HEK293 (cell line): ENCODE measurements at regions of chr12 and their contacts with region 1.

Region 1: DNA sequence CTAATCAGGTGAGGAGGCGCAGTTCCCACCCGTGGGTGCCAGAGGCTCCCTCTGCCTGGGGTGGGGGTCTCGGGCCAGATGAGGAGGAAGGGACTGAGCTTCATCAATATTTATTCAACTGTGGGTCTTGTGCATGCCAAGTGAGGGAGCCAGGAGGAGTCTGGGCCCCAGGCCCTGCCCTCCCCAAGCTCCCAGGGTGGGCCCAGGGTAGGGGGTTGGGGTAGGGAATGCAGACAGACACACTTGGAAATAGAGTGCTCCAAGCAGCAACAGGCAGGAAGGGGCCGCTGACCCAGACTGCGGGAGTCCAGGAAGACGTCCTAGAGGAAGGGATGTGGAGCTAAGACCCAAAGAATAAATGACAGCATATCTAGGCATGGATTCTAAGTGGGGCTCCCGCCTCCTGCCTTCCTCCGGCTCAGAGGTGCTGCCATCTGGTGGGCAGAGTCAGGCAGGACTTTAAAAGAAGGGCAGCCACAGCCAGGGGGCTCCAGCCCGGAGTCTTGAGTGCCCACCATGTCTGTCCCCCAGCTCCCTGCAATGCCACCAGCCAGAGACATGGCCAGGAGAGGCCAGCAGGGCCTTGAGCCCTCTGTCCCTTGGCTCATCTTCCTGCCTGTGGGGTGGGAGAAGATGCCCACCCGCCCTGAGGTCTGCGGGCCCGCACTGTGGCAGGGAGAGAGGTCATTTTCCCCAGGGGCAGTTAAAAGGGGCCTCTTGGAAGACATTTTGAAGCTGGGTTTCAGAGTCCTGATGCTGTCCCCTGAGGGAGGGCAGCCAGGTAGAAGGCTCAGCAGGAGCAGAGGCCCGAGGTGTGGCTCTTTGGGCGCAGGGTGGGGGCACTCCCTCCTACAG is 70.1 kb downstream of the PHETA1 start:
- H3K4me3 ChIP-seq: no peak overlapping the region
- H3K27ac ChIP-seq: no peak overlapping the region
- H3K4me1 ChIP-seq: no peaks in the 10 kb centered on the region
- CTCF ChIP-seq: peak; percentile 87

Region 2: DNA sequence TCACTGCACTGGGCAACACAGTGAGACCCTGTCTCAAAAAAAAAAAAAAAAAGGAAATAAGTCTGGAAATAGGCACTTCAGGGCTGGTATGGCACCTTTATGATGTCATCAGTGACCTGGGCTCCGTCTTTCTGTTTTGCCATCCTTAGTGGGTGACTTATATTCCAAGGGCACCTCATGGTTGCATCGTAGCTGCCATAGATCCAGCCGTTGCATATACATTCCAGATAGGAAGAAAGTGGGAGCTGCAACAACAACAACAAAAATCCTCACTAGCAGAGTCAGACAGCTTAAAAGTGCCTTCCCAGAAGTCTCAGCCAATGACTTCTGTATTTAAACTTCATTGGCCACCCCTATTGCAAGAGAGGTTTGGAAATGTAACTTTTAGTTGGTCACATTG is 404.9 kb before region 1 on chr12:
- CTCF ChIA-PET with region 1: interaction called, 28 read pairs
- POLR2A ChIA-PET with region 1: interaction called, 4 read pairs
- H3K4me3 ChIP-seq: no peak overlapping the region
- H3K27ac ChIP-seq: no peak overlapping the region
- H3K4me1 ChIP-seq: no peaks in the 10 kb centered on the region
- CTCF ChIP-seq: no peak

Region 3: DNA sequence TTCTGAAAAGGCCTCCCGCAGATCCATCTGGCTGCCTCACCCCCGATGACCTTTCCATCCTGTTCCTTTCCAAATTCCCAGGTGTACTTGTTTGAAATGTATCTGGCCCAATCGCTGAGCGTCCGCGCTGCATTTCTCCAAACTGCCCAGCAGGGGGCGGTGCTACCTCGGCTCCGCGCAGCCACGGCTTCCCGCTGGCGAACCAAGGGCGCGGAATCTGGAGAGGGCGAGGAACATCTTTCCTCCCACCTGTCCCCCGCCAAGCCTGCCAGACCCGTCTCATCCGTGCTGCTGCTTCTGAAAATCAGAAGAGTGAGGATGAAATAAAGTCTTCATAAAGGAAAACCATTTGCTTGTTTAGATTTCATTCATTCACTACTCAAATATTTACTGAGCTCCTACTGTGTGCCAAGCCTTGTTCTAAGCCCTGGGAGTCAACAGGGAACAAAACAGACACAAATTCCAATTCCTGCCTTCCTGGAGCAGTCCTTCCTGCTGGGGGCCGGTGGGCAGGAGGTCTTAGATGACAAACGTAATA is 361.6 kb before region 1 on chr12:
- CTCF ChIA-PET with region 1: interaction called, 10 read pairs
- POLR2A ChIA-PET with region 1: no interaction called
- H3K4me3 ChIP-seq: no peak overlapping the region
- H3K27ac ChIP-seq: no peak overlapping the region
- H3K4me1 ChIP-seq: no peaks in the 10 kb centered on the region
- CTCF ChIP-seq: peak; percentile 74

Region 4: GRCh38 chr12:111024205-111024801 is 274.5 kb before region 1 on chr12:
- CTCF ChIA-PET with region 1: interaction called, 105 read pairs
- POLR2A ChIA-PET with region 1: no interaction called
- H3K4me3 ChIP-seq: no peak overlapping the region
- H3K27ac ChIP-seq: no peak overlapping the region
- H3K4me1 ChIP-seq: no peaks in the 10 kb centered on the region
- CTCF ChIP-seq: peak; percentile 84

Region 5: DNA sequence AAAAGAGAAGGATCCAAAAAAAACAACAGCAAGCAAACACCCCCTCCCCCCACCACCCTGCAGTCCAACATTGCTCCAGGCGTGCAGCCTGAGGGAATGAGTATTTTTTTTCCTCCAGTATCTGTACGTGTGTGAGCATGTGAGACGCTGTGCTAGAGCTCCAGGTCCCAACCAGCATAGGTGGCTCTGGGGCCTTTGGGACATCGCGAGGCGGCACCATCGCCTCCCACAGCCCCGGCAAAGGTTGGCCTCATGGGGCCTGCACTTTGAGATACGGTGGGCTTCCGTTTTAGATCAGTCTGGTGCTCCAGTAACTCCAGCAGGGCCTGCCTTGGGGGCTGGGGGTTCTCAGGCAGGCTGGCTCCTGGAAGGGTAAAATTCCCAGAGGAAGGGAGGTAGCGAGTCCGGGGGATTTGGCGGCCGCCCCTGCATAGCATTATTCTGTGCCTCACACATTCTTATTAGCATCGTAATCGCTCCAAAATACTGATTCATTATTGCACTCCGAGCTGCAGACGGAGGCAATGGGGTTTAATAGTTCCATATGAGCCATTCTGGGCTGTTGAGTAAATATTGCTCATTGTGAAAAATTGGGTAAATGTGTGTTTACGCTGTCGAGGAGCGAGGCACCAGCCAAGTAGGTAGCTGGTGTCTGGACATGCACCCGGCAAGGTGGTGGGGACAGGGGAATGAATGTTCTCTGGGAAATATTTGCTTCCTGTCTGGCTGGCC is 235.3 kb before region 1 on chr12:
- CTCF ChIA-PET with region 1: no interaction called
- POLR2A ChIA-PET with region 1: no interaction called
- H3K4me3 ChIP-seq: no peak overlapping the region
- H3K27ac ChIP-seq: no peak overlapping the region
- H3K4me1 ChIP-seq: no peaks in the 10 kb centered on the region
- CTCF ChIP-seq: no peak

Region 6: DNA sequence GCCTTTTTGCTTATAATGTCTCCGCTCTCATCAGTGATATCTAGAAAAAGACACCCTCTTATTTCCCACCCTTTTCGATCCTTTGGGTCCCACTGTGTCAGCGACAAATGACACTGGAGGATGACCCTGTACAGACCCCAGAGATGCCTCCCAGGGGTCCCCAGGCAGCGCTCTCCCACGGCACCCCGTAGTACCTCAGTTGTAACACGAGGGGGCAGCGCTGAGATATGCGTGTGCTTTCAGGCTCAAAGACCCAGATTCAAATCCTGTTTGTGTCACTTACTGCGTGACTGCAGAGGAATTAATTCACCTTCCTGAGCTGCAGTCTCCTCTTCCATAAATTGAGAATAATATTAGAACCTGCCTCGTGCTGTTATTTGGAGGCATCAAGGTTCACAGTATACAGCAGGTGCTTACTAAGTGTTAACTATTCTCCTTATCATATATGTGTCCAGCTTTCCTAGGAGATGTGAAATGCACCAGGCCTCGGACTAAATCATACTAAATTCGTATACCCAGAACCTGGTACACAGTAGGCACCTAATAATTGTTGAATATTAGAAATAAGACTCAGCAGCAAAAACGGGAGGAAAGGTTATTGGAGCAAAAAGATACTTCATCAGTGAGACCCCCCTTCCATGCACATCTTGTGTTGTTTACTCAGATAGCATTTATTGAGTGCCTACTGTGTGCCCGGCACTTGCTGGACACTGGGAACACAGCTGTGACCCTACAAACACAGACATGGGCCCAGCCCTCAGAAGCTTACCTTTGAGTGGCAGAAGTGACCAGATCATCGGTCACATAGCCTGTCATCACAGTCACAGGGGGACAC is 29.9 kb before region 1 on chr12:
- CTCF ChIA-PET with region 1: interaction called, 30 read pairs
- POLR2A ChIA-PET with region 1: no interaction called
- H3K4me3 ChIP-seq: no peak overlapping the region
- H3K27ac ChIP-seq: no peak overlapping the region
- H3K4me1 ChIP-seq: peaks cover 7% of the 10 kb centered on the region
- CTCF ChIP-seq: peak; percentile 34; the same call in 1 of the 2 replicates

Region 7: DNA sequence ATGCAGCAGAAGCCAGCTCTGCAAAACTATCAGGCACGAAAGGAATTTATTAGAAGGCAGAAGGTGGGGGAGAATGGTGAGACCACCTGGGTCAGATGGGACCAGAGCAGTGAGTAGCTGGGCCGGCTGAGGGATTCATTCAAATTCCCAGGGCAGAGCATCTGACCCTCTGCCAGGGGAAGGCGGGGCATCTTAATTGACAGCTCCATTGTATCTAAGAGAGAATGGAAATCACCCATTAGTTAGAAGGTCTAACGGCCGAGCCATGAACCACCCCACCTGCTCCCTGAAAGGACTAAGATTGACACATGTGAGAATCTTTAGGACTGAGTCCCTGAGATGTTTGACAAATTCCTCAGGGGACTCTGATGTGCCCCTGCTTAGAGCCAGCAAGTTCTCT is 13.6 kb before region 1 on chr12:
- CTCF ChIA-PET with region 1: interaction called, 22 read pairs
- POLR2A ChIA-PET with region 1: no interaction called
- H3K4me3 ChIP-seq: no peak overlapping the region
- H3K27ac ChIP-seq: no peak overlapping the region
- H3K4me1 ChIP-seq: no peaks in the 10 kb centered on the region
- CTCF ChIP-seq: no peak

Region 8: GRCh38 chr12:111313833-111314259 is 15.0 kb after region 1 on chr12:
- CTCF ChIA-PET with region 1: interaction called, 30 read pairs
- POLR2A ChIA-PET with region 1: interaction called, 3 read pairs
- H3K4me3 ChIP-seq: no peak overlapping the region
- H3K27ac ChIP-seq: no peak overlapping the region
- H3K4me1 ChIP-seq: no peaks in the 10 kb centered on the region
- CTCF ChIP-seq: peak; percentile 81

Region 9: GRCh38 chr12:111692575-111693210 is 393.9 kb after region 1 on chr12:
- CTCF ChIA-PET with region 1: no interaction called
- POLR2A ChIA-PET with region 1: no interaction called
- H3K4me3 ChIP-seq: no peak overlapping the region
- H3K27ac ChIP-seq: no peak overlapping the region
- H3K4me1 ChIP-seq: no peaks in the 10 kb centered on the region
- CTCF ChIP-seq: no peak